Heart right ventricle (tissue), 16 donors: ENCODE measurements at regions of chr18 and their contacts with region 1.

Region 1: DNA sequence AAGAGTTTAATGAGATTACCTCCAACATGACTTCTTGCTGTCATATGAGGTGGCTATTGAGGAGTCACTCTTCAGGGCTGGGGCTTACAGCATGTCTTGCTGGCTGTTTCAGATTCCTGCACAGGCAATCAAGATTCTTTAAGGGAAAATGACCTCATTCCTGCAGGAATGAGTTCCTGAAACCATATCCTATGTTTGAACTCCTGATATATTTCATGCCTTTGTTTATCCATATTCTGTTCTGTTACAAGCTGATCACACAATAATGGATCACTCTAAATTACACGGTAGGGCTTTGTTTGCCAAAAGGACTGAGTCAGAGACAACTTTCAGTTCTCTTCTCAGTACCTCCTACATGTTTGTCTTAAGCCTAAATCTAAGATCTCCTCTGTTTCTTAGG is 879.8 kb upstream of the PIK3C3 start:
- DNase-seq: no peak
- ATAC-seq: no peak
- H3K4me3 ChIP-seq: no peak overlapping the region
- H3K27ac ChIP-seq: no peak overlapping the region
- H3K4me1 ChIP-seq: no peaks in the 10 kb centered on the region
- H3K27me3 ChIP-seq: no peaks in the 10 kb centered on the region
- CTCF ChIP-seq: no peak

Region 2: GRCh38 chr18:40877096-40877495 is 198.1 kb before region 1 on chr18:
- intact Hi-C with region 1: no loop called
- DNase-seq: no peak
- ATAC-seq: no peak
- H3K4me3 ChIP-seq: no peak overlapping the region
- H3K27ac ChIP-seq: no peak overlapping the region
- H3K4me1 ChIP-seq: no peaks in the 10 kb centered on the region
- H3K27me3 ChIP-seq: no peaks in the 10 kb centered on the region
- CTCF ChIP-seq: no peak

Region 3: GRCh38 chr18:41022484-41022883 is 52.7 kb before region 1 on chr18:
- intact Hi-C with region 1: loop called in 1 of 10 experiments (anchors 10 kb)
- DNase-seq: no peak
- ATAC-seq: no peak
- H3K4me3 ChIP-seq: no peak overlapping the region
- H3K27ac ChIP-seq: no peak overlapping the region
- H3K4me1 ChIP-seq: no peaks in the 10 kb centered on the region
- H3K27me3 ChIP-seq: no peaks in the 10 kb centered on the region
- CTCF ChIP-seq: no peak